ENCODE measurements at regions of chr19 and their contacts with region 1.

Region 1: DNA sequence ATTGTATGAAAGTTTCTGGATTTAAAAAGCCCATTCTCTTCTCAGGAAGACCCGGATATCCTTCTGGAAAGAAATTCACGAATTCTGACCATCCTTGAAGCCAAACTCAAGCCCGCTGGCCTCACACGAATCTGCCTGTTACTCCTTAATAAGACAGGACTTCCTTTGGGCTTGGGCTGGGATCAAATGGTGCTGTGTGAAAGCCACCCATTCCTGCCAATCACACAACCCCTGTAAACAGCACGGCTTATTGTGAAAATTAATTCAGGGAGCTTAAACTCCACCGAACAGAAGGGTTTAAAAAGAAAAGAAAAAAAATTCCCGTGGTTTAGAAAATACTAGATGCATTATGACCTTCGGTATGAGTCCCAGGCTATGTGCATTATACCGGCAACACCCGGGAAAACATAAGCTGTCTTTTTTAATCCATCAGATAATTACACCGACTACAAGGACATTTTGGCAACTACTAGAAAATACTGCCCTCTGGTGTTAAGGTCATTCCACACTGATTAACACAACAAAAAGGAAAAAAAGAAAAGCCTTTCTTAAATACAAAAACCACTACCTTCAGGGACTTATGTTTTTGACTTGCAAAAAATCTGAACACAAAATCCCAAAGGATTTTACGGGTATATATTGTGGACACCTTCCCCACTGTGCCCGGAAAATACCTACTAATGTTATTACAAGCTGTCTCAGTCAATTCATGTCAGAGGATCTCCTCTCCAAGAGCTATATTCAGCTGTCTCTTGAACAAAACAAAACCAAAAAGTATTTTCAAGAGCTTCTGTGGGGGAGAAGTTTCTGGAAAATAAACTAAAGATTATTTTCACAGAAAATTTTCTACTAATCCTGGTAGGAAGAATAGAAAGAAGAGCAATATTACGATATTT is 76.0 kb upstream of the LSM14A start:
- DNase-seq: peak; percentile 44 to 65 (median 50)
- ATAC-seq: peak; percentile 78
- H3K4me3 ChIP-seq: no peak overlapping the region
- H3K27ac ChIP-seq: no peak overlapping the region
- H3K4me1 ChIP-seq: no peaks in the 10 kb centered on the region
- H3K27me3 ChIP-seq: peaks cover 0 to 6% of the 10 kb centered on the region in 2 experiments; a peak in 3 of 5 replicates
- CTCF ChIP-seq: peak; percentile 55 to 91 (median 81); a peak in 5 of 6 replicates
- EP300 ChIP-seq: no peak
- POLR2A ChIP-seq: no peak
- RAD21 ChIP-seq: peak; percentile 78 to 95

Region 2: DNA sequence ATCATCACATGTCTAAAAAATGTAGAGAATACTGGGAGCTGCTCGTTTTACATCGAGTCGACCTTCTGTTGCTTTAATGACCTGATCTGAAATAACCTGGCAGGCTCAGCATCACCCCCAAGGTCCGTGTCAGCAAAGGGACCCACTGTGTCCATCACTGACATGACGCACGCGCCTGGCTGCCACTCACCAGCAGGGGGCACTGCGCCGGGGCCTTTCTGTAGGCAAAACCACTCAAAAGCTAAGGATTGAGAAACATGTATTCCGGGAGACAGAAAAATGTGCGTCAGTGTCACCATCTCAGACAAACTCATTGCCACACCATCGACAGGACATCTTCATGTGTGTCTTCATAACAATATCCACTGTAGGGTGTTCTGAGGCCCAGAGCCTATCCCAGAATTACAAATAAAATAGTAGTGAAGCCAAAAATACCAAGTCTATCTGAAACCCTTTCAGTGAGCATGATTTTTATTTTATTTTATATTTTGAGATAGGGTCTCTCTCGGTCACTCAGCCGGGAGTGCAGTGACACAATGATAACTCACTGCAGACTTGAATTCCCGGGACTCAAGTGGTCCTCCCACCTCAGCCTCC is 54.2 kb before region 1 on chr19:
- CTCF ChIA-PET with region 1: no interaction called
- POLR2A ChIA-PET with region 1: no interaction called
- in situ Hi-C with region 1: no loop called
- intact Hi-C with region 1: loop called (anchors 1 kb)
- DNase-seq: peak; percentile 56 to 72 (median 64)
- ATAC-seq: peak; percentile 88
- H3K4me3 ChIP-seq: no peak overlapping the region
- H3K27ac ChIP-seq: no peak overlapping the region
- H3K4me1 ChIP-seq: no peaks in the 10 kb centered on the region
- H3K27me3 ChIP-seq: peaks cover 0 to 8% of the 10 kb centered on the region in 2 experiments; a peak in 1 of 5 replicates
- CTCF ChIP-seq: peak; percentile 82 to 92 (median 82)
- EP300 ChIP-seq: no peak
- POLR2A ChIP-seq: no peak
- RAD21 ChIP-seq: peak; percentile 29 to 67; a peak in 3 of 4 replicates

Region 3: GRCh38 chr19:34145741-34146202 is 49.5 kb after region 1 on chr19:
- CTCF ChIA-PET with region 1: interaction called, 9 read pairs
- POLR2A ChIA-PET with region 1: no interaction called
- in situ Hi-C with region 1: no loop called
- intact Hi-C with region 1: loop called (anchors 2 kb)
- DNase-seq: peak; percentile 61 to 73 (median 66)
- ATAC-seq: peak; percentile 85
- H3K4me3 ChIP-seq: no peak overlapping the region
- H3K27ac ChIP-seq: no peak overlapping the region
- H3K4me1 ChIP-seq: no peaks in the 10 kb centered on the region
- H3K27me3 ChIP-seq: no peaks in the 10 kb centered on the region; a peak in 2 of 5 replicates
- CTCF ChIP-seq: peak; percentile 84 to 93 (median 86)
- EP300 ChIP-seq: no peak
- POLR2A ChIP-seq: no peak
- RAD21 ChIP-seq: peak; percentile 77 to 91